Mucosa of descending colon (tissue), 3 donors: ENCODE measurements at regions of chr3 and their contacts with region 1.

Region 1: GRCh38 chr3:149566292-149566975 is 91.4 kb downstream of the WWTR1 start:
- DNase-seq: no peak
- ATAC-seq: no peak
- H3K4me3 ChIP-seq: no peak overlapping the region
- H3K4me1 ChIP-seq: no peaks in the 10 kb centered on the region
- CTCF ChIP-seq: no peak

Region 2: DNA sequence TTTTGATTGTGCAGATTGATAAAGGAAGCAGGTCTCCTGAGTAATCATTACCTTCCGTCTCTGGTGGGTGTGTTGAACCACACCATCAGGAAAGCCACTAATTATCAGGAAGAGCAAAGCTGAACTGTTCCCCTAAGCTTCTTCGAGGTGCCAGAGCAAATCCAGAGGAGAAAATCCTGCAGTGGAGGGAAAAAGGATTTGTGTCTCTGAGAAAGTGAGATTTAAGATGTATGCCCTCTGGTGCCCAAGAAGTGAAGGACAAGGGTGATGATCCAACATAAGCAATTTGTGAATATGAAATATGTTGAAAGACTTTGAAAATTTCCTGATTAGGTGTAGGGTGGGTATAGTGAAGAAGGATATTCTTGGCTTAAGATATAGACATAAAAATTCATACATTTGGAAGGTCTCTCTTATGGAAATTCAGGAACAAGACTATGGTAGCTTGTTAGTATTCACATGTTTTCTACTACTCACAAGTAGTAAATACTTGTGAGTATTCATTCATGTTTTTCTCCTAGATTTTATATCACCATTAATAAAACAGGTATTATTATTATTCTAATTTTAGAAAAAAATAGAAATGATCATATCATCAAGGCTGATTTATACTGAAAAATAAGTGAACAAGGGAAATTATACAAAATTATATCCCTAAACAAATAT is 151.1 kb after region 1 on chr3:
- intact Hi-C with region 1: loop called in 1 of 2 experiments (anchors 5 kb)
- DNase-seq: peak in 1 of 3 donors; percentile 78
- ATAC-seq: peak; percentile 56
- H3K4me3 ChIP-seq: no peak overlapping the region
- H3K4me1 ChIP-seq: no peaks in the 10 kb centered on the region
- CTCF ChIP-seq: peak; percentile 44